Activated CD4-positive, alpha-beta T cell treated with anti-CD3 and anti-CD28 coated beads for 36 hours (primary cell): ENCODE measurements at regions of chr22 and their contacts with region 1.

Region 1: GRCh38 chr22:25747245-25747944 is 5.4 kb downstream of the MYO18B start:
- DNase-seq: no peak
- ATAC-seq: no peak
- H3K4me3 Mint-ChIP-seq: no peak overlapping the region
- H3K27ac Mint-ChIP-seq: no peak overlapping the region
- H3K4me1 Mint-ChIP-seq: peaks cover 38% of the 10 kb centered on the region
- H3K27me3 Mint-ChIP-seq: peaks cover 14% of the 10 kb centered on the region

Region 2: GRCh38 chr22:25488244-25489020 is 259.0 kb before region 1 on chr22:
- CTCF ChIA-PET with region 1: no interaction called
- POLR2A ChIA-PET with region 1: no interaction called
- intact Hi-C with region 1: loop called in 1 of 2 experiments (anchors 5 kb)
- DNase-seq: peak; percentile 80
- ATAC-seq: peak; percentile 43
- H3K4me3 Mint-ChIP-seq: no peak overlapping the region
- H3K27ac Mint-ChIP-seq: no peak overlapping the region
- H3K4me1 Mint-ChIP-seq: peaks cover 47% of the 10 kb centered on the region
- H3K27me3 Mint-ChIP-seq: peaks cover 2% of the 10 kb centered on the region

Region 3: DNA sequence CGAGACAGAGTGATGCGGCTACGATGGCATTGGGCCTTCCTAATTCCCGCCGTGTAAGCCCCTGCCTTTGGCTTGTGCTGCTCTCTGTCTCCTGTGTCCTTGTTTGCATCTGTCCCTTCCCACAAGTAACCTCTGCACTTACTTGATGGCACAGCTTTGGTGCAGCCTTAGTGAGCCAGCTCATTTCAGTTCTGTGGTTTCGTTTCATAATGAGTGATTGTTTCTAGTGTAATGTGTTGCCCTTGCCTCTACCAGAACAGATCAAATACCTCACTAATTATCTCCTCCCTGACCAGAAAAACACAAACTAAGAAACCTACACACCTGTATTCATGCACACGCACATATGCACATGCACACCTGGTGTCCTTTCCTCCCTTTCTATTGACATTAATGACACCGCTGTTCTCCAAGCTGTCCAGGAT is 124.1 kb before region 1 on chr22:
- CTCF ChIA-PET with region 1: no interaction called
- POLR2A ChIA-PET with region 1: interaction called, 4 read pairs
- intact Hi-C with region 1: loop called in 1 of 2 experiments (anchors 1 kb)
- DNase-seq: peak; percentile 41
- ATAC-seq: peak; percentile 93
- H3K4me3 Mint-ChIP-seq: no peak overlapping the region
- H3K27ac Mint-ChIP-seq: no peak overlapping the region
- H3K4me1 Mint-ChIP-seq: peaks cover 23% of the 10 kb centered on the region
- H3K27me3 Mint-ChIP-seq: peaks cover 2% of the 10 kb centered on the region

Region 4: DNA sequence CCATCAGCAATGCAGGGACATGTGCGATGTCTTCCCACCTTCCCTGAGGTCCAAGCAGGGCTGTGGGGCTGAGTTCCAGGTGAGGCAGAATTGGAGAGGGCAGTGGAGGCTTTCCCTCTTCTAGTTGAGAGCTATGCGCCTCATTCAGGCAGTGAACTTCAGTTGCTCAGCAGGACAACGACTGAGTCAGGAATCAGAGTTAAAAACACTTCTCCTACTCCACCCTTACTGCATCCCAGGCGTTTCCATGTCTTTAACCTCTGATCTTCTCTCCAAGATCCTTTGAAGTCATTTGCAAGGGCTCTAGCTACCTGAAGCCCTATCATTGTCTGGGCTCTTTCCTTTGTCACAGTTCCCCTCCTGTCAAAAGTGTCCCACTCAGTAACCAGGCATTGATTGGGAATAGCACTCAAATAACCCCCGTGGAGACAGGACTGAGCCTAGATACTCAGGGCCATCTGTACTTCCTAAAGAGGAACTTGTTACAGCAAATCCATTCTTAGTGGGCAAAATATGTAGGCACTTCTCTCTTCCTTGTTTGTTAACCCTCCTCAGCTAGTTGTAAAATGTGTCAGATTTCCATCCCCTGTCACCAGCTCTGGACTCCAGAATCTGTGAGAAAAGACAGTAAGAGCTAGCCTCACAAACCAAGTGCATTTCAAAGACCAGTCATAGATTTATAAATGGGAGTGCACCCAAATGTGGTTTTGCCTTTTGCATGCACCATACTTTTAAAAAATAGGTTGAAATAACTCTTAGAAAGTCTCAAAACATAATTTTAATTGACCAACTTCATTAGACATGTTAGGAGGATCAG is 77.9 kb before region 1 on chr22:
- CTCF ChIA-PET with region 1: no interaction called
- POLR2A ChIA-PET with region 1: no interaction called
- intact Hi-C with region 1: loop called in 1 of 2 experiments (anchors 1 kb)
- DNase-seq: no peak
- ATAC-seq: no peak
- H3K4me3 Mint-ChIP-seq: no peak overlapping the region
- H3K27ac Mint-ChIP-seq: no peak overlapping the region
- H3K4me1 Mint-ChIP-seq: peaks cover 13% of the 10 kb centered on the region
- H3K27me3 Mint-ChIP-seq: no peaks in the 10 kb centered on the region

Region 5: DNA sequence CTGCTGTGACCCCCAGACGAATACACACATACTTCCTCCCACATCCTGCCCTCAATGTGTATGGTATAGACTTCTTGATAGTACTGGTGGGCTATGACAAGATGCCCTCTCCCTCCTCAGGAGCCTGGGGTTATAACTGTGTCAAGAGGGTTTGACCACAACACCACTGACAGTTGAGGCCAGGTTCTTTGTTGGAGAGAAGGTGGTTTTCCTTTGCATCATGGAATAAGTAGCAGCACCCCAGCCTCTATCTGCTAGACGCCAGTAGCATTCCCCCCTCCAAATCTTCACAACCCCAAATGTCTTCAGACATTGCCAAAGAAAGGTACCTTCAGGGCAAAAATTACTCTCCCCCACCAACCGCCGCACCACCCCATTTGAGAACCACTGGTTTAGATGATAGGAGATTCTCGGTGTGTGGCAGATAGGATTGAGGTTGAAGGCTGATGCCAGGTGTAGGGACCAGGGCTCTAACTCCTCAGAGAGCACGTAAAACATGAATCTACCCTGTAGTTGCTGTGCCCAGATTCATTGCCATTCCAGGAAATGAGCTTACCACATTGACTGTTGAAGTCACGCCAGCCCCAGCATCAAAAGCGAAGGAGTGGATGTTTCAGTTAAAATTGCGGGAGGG is 10.9 kb before region 1 on chr22:
- CTCF ChIA-PET with region 1: interaction called, 5 read pairs
- POLR2A ChIA-PET with region 1: interaction called, 8 read pairs
- intact Hi-C with region 1: loop called in 1 of 2 experiments (anchors 1 kb)
- DNase-seq: peak; percentile 73
- ATAC-seq: peak; percentile 87
- H3K4me3 Mint-ChIP-seq: no peak overlapping the region
- H3K27ac Mint-ChIP-seq: peak overlapping the region; percentile 80
- H3K4me1 Mint-ChIP-seq: peaks cover 33% of the 10 kb centered on the region
- H3K27me3 Mint-ChIP-seq: peaks cover 5% of the 10 kb centered on the region